ENCODE measurements at regions of chr7 and their contacts with region 1.

Region 1: DNA sequence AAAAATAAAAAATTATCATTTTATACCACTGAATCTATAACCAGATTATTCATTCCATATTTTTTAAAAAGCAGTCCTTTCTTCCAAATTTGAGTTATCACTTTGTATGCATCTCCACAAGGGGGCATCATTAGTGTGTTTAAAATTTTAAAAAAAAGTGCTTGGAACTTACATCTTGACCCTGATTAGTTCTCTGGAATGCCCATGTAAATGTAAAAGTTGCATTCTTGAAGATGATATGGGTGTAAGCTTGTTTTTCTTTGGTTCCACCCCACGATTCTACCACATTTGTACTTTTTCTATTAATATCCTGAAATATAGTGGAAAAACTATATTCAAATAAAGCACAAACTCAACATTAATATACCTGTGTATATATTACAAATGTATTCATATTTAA is 144.9 kb downstream of the ELAPOR2 start:
- DNase-seq: no peak
- ATAC-seq: no peak
- H3K4me3 ChIP-seq: no peak overlapping the region
- H3K27ac ChIP-seq: no peak overlapping the region
- H3K4me1 ChIP-seq: no peaks in the 10 kb centered on the region
- H3K27me3 ChIP-seq: no peaks in the 10 kb centered on the region
- CTCF ChIP-seq: peak; percentile 44 to 70 (median 53); a peak in 5 of 6 replicates
- POLR2A ChIP-seq: no peak
- RAD21 ChIP-seq: peak; percentile 40

Region 2: DNA sequence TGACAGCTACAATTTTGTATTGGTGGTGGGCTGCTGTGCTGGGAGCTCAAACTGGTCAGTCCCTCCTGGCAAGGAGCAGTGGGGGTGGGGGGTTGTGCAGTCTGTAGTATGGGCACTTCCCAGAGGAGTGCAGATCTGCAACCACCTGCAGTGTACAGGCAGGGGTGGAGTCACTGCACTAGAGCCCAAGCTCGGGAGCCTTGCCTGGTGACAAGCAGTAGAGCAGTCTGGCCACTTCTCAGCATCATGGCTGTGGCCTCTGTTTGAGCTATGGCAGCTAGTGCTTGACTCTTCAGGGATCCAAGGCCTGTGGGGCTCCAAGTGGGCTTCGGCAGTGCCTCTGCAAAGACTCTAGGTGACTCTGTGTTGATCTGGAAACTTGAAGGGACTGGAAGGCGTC is 855.9 kb before region 1 on chr7:
- CTCF ChIA-PET with region 1: no interaction called
- POLR2A ChIA-PET with region 1: no interaction called
- RAD21 ChIA-PET with region 1: no interaction called
- intact Hi-C with region 1: no loop called
- DNase-seq: no peak
- ATAC-seq: no peak
- H3K4me3 ChIP-seq: no peak overlapping the region
- H3K27ac ChIP-seq: no peak overlapping the region
- H3K4me1 ChIP-seq: no peaks in the 10 kb centered on the region
- H3K27me3 ChIP-seq: no peaks in the 10 kb centered on the region
- CTCF ChIP-seq: no peak
- POLR2A ChIP-seq: no peak
- RAD21 ChIP-seq: no peak

Region 3: DNA sequence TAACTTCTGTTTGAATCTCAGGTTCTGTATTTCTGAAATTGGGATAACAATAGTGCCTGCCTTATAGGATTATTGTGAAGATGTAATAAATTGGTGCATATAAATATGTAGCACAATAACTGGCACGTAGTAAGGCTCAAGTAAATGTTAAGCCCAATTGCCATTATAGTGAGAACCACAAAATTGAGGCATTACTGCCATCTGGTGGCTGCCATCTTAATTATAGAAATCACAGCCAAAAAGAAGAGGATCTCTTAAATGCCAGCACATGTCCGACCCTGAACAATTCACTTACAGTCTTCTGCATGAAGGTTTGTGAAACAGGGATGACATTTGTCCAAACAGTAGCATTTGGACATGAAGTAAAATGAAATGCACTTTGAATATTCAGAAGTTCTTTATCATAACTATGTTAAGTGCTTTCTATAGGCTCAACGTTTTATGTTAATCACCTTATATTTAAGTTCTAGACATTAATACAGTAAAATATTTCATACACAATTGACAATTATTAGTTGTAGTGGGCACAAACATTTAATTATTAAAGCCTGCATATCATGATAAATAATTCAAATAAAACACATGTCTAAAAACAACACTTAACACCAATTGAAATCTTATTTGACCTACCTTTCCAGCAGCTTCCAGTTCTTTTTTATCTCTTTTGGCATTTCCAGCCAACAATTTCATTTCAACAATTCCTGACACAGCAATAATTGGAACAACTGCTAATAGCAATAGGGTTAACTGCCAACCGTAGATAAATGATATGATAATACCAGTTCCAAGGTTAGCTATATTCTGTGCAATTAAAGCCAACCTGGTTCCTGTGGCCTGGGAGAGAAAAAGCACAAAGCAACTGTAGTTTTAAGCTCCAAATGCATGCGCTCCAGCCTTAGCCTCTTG is 502.4 kb after region 1 on chr7:
- CTCF ChIA-PET with region 1: interaction called, 3 read pairs
- POLR2A ChIA-PET with region 1: no interaction called
- RAD21 ChIA-PET with region 1: no interaction called
- intact Hi-C with region 1: loop called (anchors 5 kb)
- DNase-seq: peak; percentile 62
- ATAC-seq: peak; percentile 84
- H3K4me3 ChIP-seq: no peak overlapping the region
- H3K27ac ChIP-seq: no peak overlapping the region
- H3K4me1 ChIP-seq: no peaks in the 10 kb centered on the region
- H3K27me3 ChIP-seq: no peaks in the 10 kb centered on the region
- CTCF ChIP-seq: peak; percentile 52 to 75 (median 71)
- POLR2A ChIP-seq: no peak
- RAD21 ChIP-seq: peak; percentile 85

Measured in HCT116 (cell line).